T-cell (primary cell): ENCODE measurements at regions of chrX and their contacts with region 1.

Region 1: GRCh38 chrX:129679901-129680300 is 25.1 kb upstream of the APLN start:
- DNase-seq: no peak
- ATAC-seq: no peak
- H3K4me3 ChIP-seq: no peak overlapping the region
- H3K4me3 Mint-ChIP-seq: no peak overlapping the region
- H3K27ac ChIP-seq: no peak overlapping the region
- H3K27ac Mint-ChIP-seq: peak overlapping the region in 1 of 2 donors; percentile 46
- H3K4me1 ChIP-seq: peaks cover 5 to 21% of the 10 kb centered on the region in 2 experiments
- H3K4me1 Mint-ChIP-seq: peaks cover 7 to 27% (median 12%) of the 10 kb centered on the region in 3 donors
- H3K27me3 ChIP-seq: no peaks in the 10 kb centered on the region
- H3K27me3 Mint-ChIP-seq: peaks cover 0 to 22% of the 10 kb centered on the region in 2 donors

Region 2: GRCh38 chrX:129609443-129609794 is 70.5 kb before region 1 on chrX:
- CTCF ChIA-PET with region 1: interaction called in 1 of 2 experiments, 5 read pairs
- POLR2A ChIA-PET with region 1: interaction called in 1 of 2 experiments, 11 read pairs
- DNase-seq: no peak
- ATAC-seq: no peak
- H3K4me3 ChIP-seq: no peak overlapping the region
- H3K4me3 Mint-ChIP-seq: no peak overlapping the region
- H3K27ac ChIP-seq: no peak overlapping the region
- H3K27ac Mint-ChIP-seq: no peak overlapping the region
- H3K4me1 ChIP-seq: peaks cover 3 to 19% of the 10 kb centered on the region in 2 experiments
- H3K4me1 Mint-ChIP-seq: peaks cover 0 to 24% (median 13%) of the 10 kb centered on the region in 3 donors
- H3K27me3 ChIP-seq: no peaks in the 10 kb centered on the region
- H3K27me3 Mint-ChIP-seq: peaks cover 0 to 10% of the 10 kb centered on the region in 2 donors

Region 3: DNA sequence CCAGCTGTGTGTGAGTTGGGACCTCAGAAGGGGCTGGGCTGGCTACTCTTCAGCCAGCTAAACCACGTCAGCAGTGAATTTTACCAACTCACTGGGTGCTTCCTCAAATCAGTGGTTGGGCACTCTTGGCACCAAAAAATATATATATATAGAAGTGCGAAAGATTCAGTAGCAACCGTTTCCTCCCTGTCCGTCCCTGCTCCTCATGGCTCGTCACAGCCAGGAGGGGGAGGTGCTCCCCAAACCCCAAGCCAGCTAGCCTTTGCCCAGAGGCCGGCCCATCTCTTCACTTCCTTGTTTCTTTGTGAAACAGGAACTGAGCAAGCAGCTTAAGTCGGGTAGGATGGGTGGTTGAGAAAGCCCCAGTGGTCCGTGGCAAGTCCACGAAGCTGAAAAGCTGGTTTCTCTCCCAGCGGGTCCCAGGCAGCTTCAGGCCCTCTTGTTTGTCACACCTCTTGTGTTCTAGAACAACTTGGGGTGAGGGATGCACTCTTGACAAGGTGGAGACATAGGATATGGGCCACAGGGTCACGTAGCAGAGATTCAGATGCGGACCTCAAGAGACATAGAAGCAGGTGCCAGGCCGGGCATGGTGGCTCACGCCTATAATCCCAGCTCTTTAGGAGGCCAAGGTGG is 93.0 kb after region 1 on chrX:
- CTCF ChIA-PET with region 1: no interaction called
- POLR2A ChIA-PET with region 1: no interaction called
- DNase-seq: peak in 27 of 35 experiments; percentile 19 to 76 (median 40)
- ATAC-seq: no peak
- H3K4me3 ChIP-seq: no peak overlapping the region
- H3K4me3 Mint-ChIP-seq: peak overlapping the region; percentile 9 to 57 (median 28)
- H3K27ac ChIP-seq: peak overlapping the region; percentile 79
- H3K27ac Mint-ChIP-seq: peak overlapping the region; percentile 84 to 97
- H3K4me1 ChIP-seq: peaks cover 55 to 100% of the 10 kb centered on the region in 2 experiments
- H3K4me1 Mint-ChIP-seq: peaks cover 78 to 87% (median 82%) of the 10 kb centered on the region in 3 donors
- H3K27me3 ChIP-seq: no peaks in the 10 kb centered on the region
- H3K27me3 Mint-ChIP-seq: no peaks in the 10 kb centered on the region

Region 4: GRCh38 chrX:129957241-129958082 is 277.6 kb after region 1 on chrX:
- CTCF ChIA-PET with region 1: no interaction called
- POLR2A ChIA-PET with region 1: no interaction called
- DNase-seq: peak in 9 of 35 experiments; percentile 8 to 48 (median 16)
- ATAC-seq: peak in 2 of 4 experiments; percentile 29 to 44
- H3K4me3 ChIP-seq: peak overlapping the region; percentile 15 to 49
- H3K4me3 Mint-ChIP-seq: peak overlapping the region; percentile 62 to 70 (median 68)
- H3K27ac ChIP-seq: peak overlapping the region; percentile 55
- H3K27ac Mint-ChIP-seq: peak overlapping the region; percentile 52 to 68
- H3K4me1 ChIP-seq: peaks cover 5 to 44% of the 10 kb centered on the region in 2 experiments
- H3K4me1 Mint-ChIP-seq: peaks cover 20 to 36% (median 25%) of the 10 kb centered on the region in 3 donors
- H3K27me3 ChIP-seq: no peaks in the 10 kb centered on the region
- H3K27me3 Mint-ChIP-seq: peaks cover 0 to 2% of the 10 kb centered on the region in 2 donors